ENCODE measurements at regions of chr6 and their contacts with region 1.

Region 1: GRCh38 chr6:142146828-142147662 is at the starts of genes NMBR and VTA1:
- DNase-seq: peak; percentile 89 to 100 (median 95)
- ATAC-seq: peak; percentile 95
- H3K4me3 ChIP-seq: peak within 1 kb of the TSS; percentile 93 to 100
- H3K4me3 Mint-ChIP-seq: peak within 1 kb of the TSS; percentile 91
- H3K27ac ChIP-seq: peak within 1 kb of the TSS; percentile 79 to 82
- H3K27ac Mint-ChIP-seq: peak within 1 kb of the TSS; percentile 87
- H3K4me1 ChIP-seq: peaks cover 31% of the 10 kb centered on the region
- H3K4me1 Mint-ChIP-seq: peaks cover 64% of the 10 kb centered on the region
- H3K27me3 ChIP-seq: no peaks in the 10 kb centered on the region
- H3K27me3 Mint-ChIP-seq: no peaks in the 10 kb centered on the region
- CTCF ChIP-seq: peak; percentile 87
- total RNA-seq, gene NMBR: not detected
- total RNA-seq, gene VTA1: 20.7 to 24.6 TPM

Region 2: GRCh38 chr6:142207265-142207877 is 60.3 kb after region 1 on chr6:
- CTCF ChIA-PET with region 1: interaction called, 11 read pairs
- POLR2A ChIA-PET with region 1: no interaction called
- intact Hi-C with region 1: loop called (anchors 1 kb)
- DNase-seq: peak; percentile 6 to 65 (median 49)
- ATAC-seq: peak; percentile 63
- H3K4me3 ChIP-seq: no peak overlapping the region
- H3K4me3 Mint-ChIP-seq: no peak overlapping the region
- H3K27ac ChIP-seq: no peak overlapping the region
- H3K27ac Mint-ChIP-seq: peak overlapping the region; percentile 42
- H3K4me1 ChIP-seq: no peaks in the 10 kb centered on the region
- H3K4me1 Mint-ChIP-seq: no peaks in the 10 kb centered on the region
- H3K27me3 ChIP-seq: no peaks in the 10 kb centered on the region
- H3K27me3 Mint-ChIP-seq: no peaks in the 10 kb centered on the region
- CTCF ChIP-seq: peak; percentile 92

Region 3: DNA sequence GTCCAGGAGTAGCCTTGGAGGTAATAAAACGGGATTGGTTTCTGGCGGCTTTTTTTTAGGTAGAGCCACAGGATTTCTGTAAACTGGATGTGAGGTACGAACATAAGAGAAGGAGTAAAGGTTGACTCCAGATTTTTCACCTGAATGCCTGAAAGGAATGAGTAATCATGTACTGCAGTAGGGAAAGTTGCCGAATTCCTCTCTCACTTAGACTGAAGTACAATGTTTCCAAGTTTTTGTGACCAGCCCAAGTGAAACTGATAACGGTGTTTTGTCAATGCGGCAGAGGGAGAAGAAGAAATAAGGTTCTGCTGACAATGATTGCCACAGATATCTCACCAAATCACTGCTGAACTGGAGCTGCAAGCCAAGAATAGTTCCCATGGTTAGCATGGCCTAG is 75.0 kb after region 1 on chr6:
- CTCF ChIA-PET with region 1: no interaction called
- POLR2A ChIA-PET with region 1: no interaction called
- intact Hi-C with region 1: no loop called
- DNase-seq: no peak
- ATAC-seq: no peak
- H3K4me3 ChIP-seq: no peak overlapping the region
- H3K4me3 Mint-ChIP-seq: no peak overlapping the region
- H3K27ac ChIP-seq: no peak overlapping the region
- H3K27ac Mint-ChIP-seq: no peak overlapping the region
- H3K4me1 ChIP-seq: no peaks in the 10 kb centered on the region
- H3K4me1 Mint-ChIP-seq: no peaks in the 10 kb centered on the region
- H3K27me3 ChIP-seq: no peaks in the 10 kb centered on the region
- H3K27me3 Mint-ChIP-seq: no peaks in the 10 kb centered on the region
- CTCF ChIP-seq: no peak

Region 4: GRCh38 chr6:142301651-142302370 is 154.8 kb after region 1 on chr6 and contains the start of gene ADGRG6:
- CTCF ChIA-PET with region 1: no interaction called
- POLR2A ChIA-PET with region 1: no interaction called
- intact Hi-C with region 1: no loop called
- DNase-seq: peak in 8 of 9 experiments; percentile 4 to 69 (median 38)
- ATAC-seq: peak; percentile 70
- H3K4me3 ChIP-seq: peak within 1 kb of the TSS; percentile 42 to 61
- H3K4me3 Mint-ChIP-seq: peak within 1 kb of the TSS; percentile 85
- H3K27ac ChIP-seq: no peak within 1 kb of the TSS
- H3K27ac Mint-ChIP-seq: peak within 1 kb of the TSS; percentile 66
- H3K4me1 ChIP-seq: peaks cover 4% of the 10 kb centered on the region
- H3K4me1 Mint-ChIP-seq: peaks cover 15% of the 10 kb centered on the region
- H3K27me3 ChIP-seq: no peaks in the 10 kb centered on the region
- H3K27me3 Mint-ChIP-seq: peaks cover 15% of the 10 kb centered on the region
- CTCF ChIP-seq: no peak
- total RNA-seq, gene ADGRG6: 0.54 to 0.61 TPM

Region 5: GRCh38 chr6:142387997-142388815 is 241.2 kb after region 1 on chr6:
- CTCF ChIA-PET with region 1: interaction called, 10 read pairs
- POLR2A ChIA-PET with region 1: no interaction called
- intact Hi-C with region 1: loop called (anchors 1 to 5 kb)
- DNase-seq: peak in 2 of 9 experiments; percentile 30 to 54
- ATAC-seq: peak; percentile 57
- H3K4me3 ChIP-seq: no peak overlapping the region
- H3K4me3 Mint-ChIP-seq: no peak overlapping the region
- H3K27ac ChIP-seq: no peak overlapping the region
- H3K27ac Mint-ChIP-seq: no peak overlapping the region
- H3K4me1 ChIP-seq: peaks cover 12% of the 10 kb centered on the region
- H3K4me1 Mint-ChIP-seq: peaks cover 12% of the 10 kb centered on the region
- H3K27me3 ChIP-seq: no peaks in the 10 kb centered on the region
- H3K27me3 Mint-ChIP-seq: peaks cover 4% of the 10 kb centered on the region
- CTCF ChIP-seq: peak; percentile 65

Region 6: DNA sequence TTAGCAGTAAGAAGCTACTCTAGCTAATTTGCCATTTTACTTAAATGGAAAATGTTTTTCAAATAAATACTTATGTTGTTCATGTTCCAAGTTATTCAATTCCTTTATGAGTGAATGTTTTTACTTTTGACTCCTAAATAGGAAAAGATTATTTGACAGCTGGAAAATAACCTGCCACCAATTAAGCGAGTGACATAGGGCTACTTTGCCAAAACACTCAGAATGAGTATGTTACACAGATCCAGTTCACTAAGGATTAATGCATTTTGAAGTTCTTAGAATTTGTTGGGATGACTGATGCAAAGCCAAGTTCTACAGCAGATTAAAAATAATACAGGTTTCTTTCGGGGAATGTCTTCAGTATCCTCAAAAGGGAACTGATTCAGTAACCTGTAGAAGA is 299.1 kb after region 1 on chr6:
- CTCF ChIA-PET with region 1: no interaction called
- POLR2A ChIA-PET with region 1: no interaction called
- intact Hi-C with region 1: no loop called
- DNase-seq: no peak
- ATAC-seq: no peak
- H3K4me3 ChIP-seq: no peak overlapping the region
- H3K4me3 Mint-ChIP-seq: no peak overlapping the region
- H3K27ac ChIP-seq: no peak overlapping the region
- H3K27ac Mint-ChIP-seq: no peak overlapping the region
- H3K4me1 ChIP-seq: no peaks in the 10 kb centered on the region
- H3K4me1 Mint-ChIP-seq: no peaks in the 10 kb centered on the region
- H3K27me3 ChIP-seq: no peaks in the 10 kb centered on the region
- H3K27me3 Mint-ChIP-seq: no peaks in the 10 kb centered on the region
- CTCF ChIP-seq: no peak

Region 7: DNA sequence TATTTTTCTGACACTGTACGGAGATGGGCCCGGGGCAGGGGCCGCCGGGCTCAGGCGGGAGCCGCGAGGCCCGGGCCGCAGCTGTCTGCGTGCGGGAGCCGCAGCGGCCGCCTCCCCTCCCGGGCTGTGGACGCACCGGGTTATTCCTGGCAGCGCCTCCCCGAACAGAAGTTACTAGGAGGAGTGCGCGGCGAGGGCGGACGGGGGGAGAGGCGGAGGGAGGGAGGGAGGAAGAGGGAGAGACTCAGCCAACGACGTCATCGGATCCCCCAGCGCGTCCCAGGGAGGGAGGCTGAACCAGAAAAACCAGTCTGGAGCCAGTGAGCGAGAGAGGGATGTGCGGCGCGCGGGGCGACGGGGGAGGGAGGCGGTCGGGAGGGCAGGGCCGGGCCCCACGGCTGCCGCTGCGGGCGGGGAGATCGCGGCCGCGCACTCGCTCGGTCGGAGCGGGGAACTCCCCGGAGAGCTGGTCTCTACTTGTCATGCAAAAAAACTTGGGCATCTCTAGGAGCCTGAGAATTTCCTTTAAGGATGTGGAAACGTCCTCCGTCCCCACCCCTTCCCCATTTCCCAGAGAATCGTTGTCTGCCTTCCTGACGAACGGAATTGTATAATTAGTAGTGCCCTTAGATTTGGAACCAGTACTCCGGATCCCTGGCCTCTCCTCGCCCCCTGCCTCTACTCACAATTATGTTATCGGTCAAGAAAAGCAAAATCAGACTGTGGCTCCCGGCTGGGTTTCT is 799.3 kb after region 1 on chr6:
- CTCF ChIA-PET with region 1: no interaction called
- POLR2A ChIA-PET with region 1: no interaction called
- intact Hi-C with region 1: loop called in 1 of 2 experiments (anchors 1 kb)
- DNase-seq: peak; percentile 79 to 98 (median 90)
- ATAC-seq: peak; percentile 41
- H3K4me3 ChIP-seq: peak overlapping the region; percentile 73 to 95
- H3K4me3 Mint-ChIP-seq: peak overlapping the region; percentile 99
- H3K27ac ChIP-seq: peak overlapping the region; percentile 96 to 97
- H3K27ac Mint-ChIP-seq: peak overlapping the region; percentile 96
- H3K4me1 ChIP-seq: peaks cover 27% of the 10 kb centered on the region
- H3K4me1 Mint-ChIP-seq: peaks cover 36% of the 10 kb centered on the region
- H3K27me3 ChIP-seq: no peaks in the 10 kb centered on the region
- H3K27me3 Mint-ChIP-seq: no peaks in the 10 kb centered on the region
- CTCF ChIP-seq: no peak

Region 8: GRCh38 chr6:143450453-143451371 is 1303.7 kb after region 1 on chr6 and contains the starts of genes ADAT2 and PEX3:
- CTCF ChIA-PET with region 1: no interaction called
- POLR2A ChIA-PET with region 1: no interaction called
- intact Hi-C with region 1: loop called (anchors 1 kb)
- DNase-seq: peak; percentile 82 to 95 (median 92)
- ATAC-seq: peak; percentile 90
- H3K4me3 ChIP-seq: peak within 1 kb of the TSS; percentile 64 to 86
- H3K4me3 Mint-ChIP-seq: peak within 1 kb of the TSS; percentile 100
- H3K27ac ChIP-seq: peak within 1 kb of the TSS; percentile 68 to 74
- H3K27ac Mint-ChIP-seq: peak within 1 kb of the TSS; percentile 96
- H3K4me1 ChIP-seq: peaks cover 21% of the 10 kb centered on the region
- H3K4me1 Mint-ChIP-seq: peaks cover 57% of the 10 kb centered on the region
- H3K27me3 ChIP-seq: no peaks in the 10 kb centered on the region
- H3K27me3 Mint-ChIP-seq: no peaks in the 10 kb centered on the region
- CTCF ChIP-seq: no peak
- total RNA-seq, gene ADAT2: 18.8 to 19.9 TPM
- total RNA-seq, gene PEX3: 10.5 to 11.6 TPM

Region 9: GRCh38 chr6:143842902-143843676 is 1696.0 kb after region 1 on chr6 and contains the start of gene LTV1:
- CTCF ChIA-PET with region 1: no interaction called
- POLR2A ChIA-PET with region 1: no interaction called
- intact Hi-C with region 1: loop called in 1 of 2 experiments (anchors 10 kb)
- DNase-seq: peak; percentile 82 to 96 (median 91)
- ATAC-seq: peak; percentile 96
- H3K4me3 ChIP-seq: peak within 1 kb of the TSS; percentile 96 to 99
- H3K4me3 Mint-ChIP-seq: peak within 1 kb of the TSS; percentile 96
- H3K27ac ChIP-seq: peak within 1 kb of the TSS; percentile 94 to 95
- H3K27ac Mint-ChIP-seq: peak within 1 kb of the TSS; percentile 98
- H3K4me1 ChIP-seq: peaks cover 6% of the 10 kb centered on the region
- H3K4me1 Mint-ChIP-seq: peaks cover 28% of the 10 kb centered on the region
- H3K27me3 ChIP-seq: no peaks in the 10 kb centered on the region
- H3K27me3 Mint-ChIP-seq: no peaks in the 10 kb centered on the region
- CTCF ChIP-seq: no peak
- total RNA-seq, gene LTV1: 31.7 to 33.4 TPM

Measured in CD8-positive, alpha-beta T cell (primary cell).